WTC11 (cell line): ENCODE measurements at regions of chr1 and their contacts with region 1.

Region 1: GRCh38 chr1:200890818-200891773 is 3.6 kb upstream of the INAVA start:
- DNase-seq: peak; percentile 80
- ATAC-seq: peak; percentile 32
- H3K4me3 Mint-ChIP-seq: peak overlapping the region; percentile 88
- H3K27ac Mint-ChIP-seq: peak overlapping the region; percentile 94
- H3K4me1 Mint-ChIP-seq: peaks cover 71% of the 10 kb centered on the region
- H3K27me3 Mint-ChIP-seq: peaks cover 3% of the 10 kb centered on the region; the same call in 1 of the 2 replicates
- CTCF ChIP-seq: no peak

Region 2: GRCh38 chr1:200873116-200873670 is 17.9 kb before region 1 on chr1:
- CTCF ChIA-PET with region 1: interaction called, 19 read pairs
- POLR2A ChIA-PET with region 1: interaction called, 8 read pairs
- DNase-seq: peak; percentile 58
- ATAC-seq: peak; percentile 28
- H3K4me3 Mint-ChIP-seq: no peak overlapping the region
- H3K27ac Mint-ChIP-seq: no peak overlapping the region
- H3K4me1 Mint-ChIP-seq: peaks cover 20% of the 10 kb centered on the region
- H3K27me3 Mint-ChIP-seq: peaks cover 42% of the 10 kb centered on the region
- CTCF ChIP-seq: no peak

Region 3: GRCh38 chr1:200917291-200917817 is 26.3 kb after region 1 on chr1:
- CTCF ChIA-PET with region 1: interaction called, 14 read pairs
- POLR2A ChIA-PET with region 1: no interaction called
- DNase-seq: no peak
- ATAC-seq: no peak
- H3K4me3 Mint-ChIP-seq: no peak overlapping the region
- H3K27ac Mint-ChIP-seq: no peak overlapping the region
- H3K4me1 Mint-ChIP-seq: peaks cover 5% of the 10 kb centered on the region; the same call in 1 of the 2 replicates
- H3K27me3 Mint-ChIP-seq: no peaks in the 10 kb centered on the region
- CTCF ChIP-seq: no peak

Region 4: GRCh38 chr1:200934676-200935245 is 43.7 kb after region 1 on chr1:
- CTCF ChIA-PET with region 1: no interaction called
- POLR2A ChIA-PET with region 1: no interaction called
- DNase-seq: no peak
- ATAC-seq: no peak
- H3K4me3 Mint-ChIP-seq: no peak overlapping the region
- H3K27ac Mint-ChIP-seq: no peak overlapping the region
- H3K4me1 Mint-ChIP-seq: no peaks in the 10 kb centered on the region
- H3K27me3 Mint-ChIP-seq: no peaks in the 10 kb centered on the region
- CTCF ChIP-seq: no peak

Region 5: DNA sequence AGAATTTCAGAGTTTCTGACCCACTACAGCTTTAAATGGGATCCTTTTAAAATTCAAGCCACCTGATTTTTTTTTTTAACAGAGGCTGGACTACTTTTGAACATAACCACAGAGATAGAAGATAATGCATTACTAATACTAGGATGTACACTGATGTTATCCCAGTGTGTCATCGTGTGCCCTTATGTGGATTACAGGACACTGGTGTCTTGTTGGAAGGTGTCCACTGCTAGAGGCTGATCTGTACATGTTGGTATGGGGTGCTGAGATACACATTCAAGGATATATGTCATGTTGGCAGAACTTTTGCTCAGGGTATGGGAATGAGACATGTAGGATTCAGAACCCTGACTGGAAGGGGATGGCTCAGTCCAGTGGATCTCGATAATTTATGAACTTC is 59.9 kb after region 1 on chr1:
- CTCF ChIA-PET with region 1: no interaction called
- POLR2A ChIA-PET with region 1: no interaction called
- DNase-seq: no peak
- ATAC-seq: no peak
- H3K4me3 Mint-ChIP-seq: no peak overlapping the region
- H3K27ac Mint-ChIP-seq: no peak overlapping the region
- H3K4me1 Mint-ChIP-seq: no peaks in the 10 kb centered on the region
- H3K27me3 Mint-ChIP-seq: no peaks in the 10 kb centered on the region
- CTCF ChIP-seq: no peak